H1 (cell line): ENCODE measurements at regions of chr6 and their contacts with region 1.

Region 1: GRCh38 chr6:30061092-30061857 is at the start of gene POLR1H:
- DNase-seq: peak; percentile 77 to 87
- H3K4me3 ChIP-seq: peak within 1 kb of the TSS; percentile 90 to 100 (median 99)
- H3K27ac ChIP-seq: peak within 1 kb of the TSS; percentile 81
- H3K4me1 ChIP-seq: peaks cover 0 to 9% (median 7%) of the 10 kb centered on the region in 4 experiments; a peak in 5 of 7 replicates
- H3K27me3 ChIP-seq: no peaks in the 10 kb centered on the region
- CTCF ChIP-seq: no peak; a peak in 1 of 4 replicates
- EP300 ChIP-seq: no peak
- POLR2A ChIP-seq: peak; percentile 96 to 98
- RAD21 ChIP-seq: peak; percentile 2 to 4; a peak in 1 of 4 replicates
- total RNA-seq, gene POLR1H: 31.5 and 35.7 TPM in 2 replicates

Region 2: GRCh38 chr6:30075161-30075986 is 14.1 kb after region 1 on chr6 and contains the start of gene RNF39:
- CTCF ChIA-PET with region 1: interaction called, 4 read pairs
- POLR2A ChIA-PET with region 1: interaction called, 21 read pairs
- DNase-seq: peak in 1 of 2 experiments; percentile 91
- H3K4me3 ChIP-seq: peak within 1 kb of the TSS; percentile 52 to 82 (median 72)
- H3K27ac ChIP-seq: no peak within 1 kb of the TSS
- H3K4me1 ChIP-seq: peaks cover 10 to 30% (median 14%) of the 10 kb centered on the region in 4 experiments; a peak in 6 of 7 replicates
- H3K27me3 ChIP-seq: peaks cover 41 to 70% (median 59%) of the 10 kb centered on the region in 4 experiments
- CTCF ChIP-seq: peak; percentile 65 to 83 (median 81)
- EP300 ChIP-seq: no peak
- POLR2A ChIP-seq: no peak
- RAD21 ChIP-seq: peak; percentile 36 to 47; a peak in 3 of 4 replicates
- total RNA-seq, gene RNF39: 1.4 and 1.7 TPM in 2 replicates